Natural killer cell (primary cell): ENCODE measurements at regions of chr2 and their contacts with region 1.

Region 1: DNA sequence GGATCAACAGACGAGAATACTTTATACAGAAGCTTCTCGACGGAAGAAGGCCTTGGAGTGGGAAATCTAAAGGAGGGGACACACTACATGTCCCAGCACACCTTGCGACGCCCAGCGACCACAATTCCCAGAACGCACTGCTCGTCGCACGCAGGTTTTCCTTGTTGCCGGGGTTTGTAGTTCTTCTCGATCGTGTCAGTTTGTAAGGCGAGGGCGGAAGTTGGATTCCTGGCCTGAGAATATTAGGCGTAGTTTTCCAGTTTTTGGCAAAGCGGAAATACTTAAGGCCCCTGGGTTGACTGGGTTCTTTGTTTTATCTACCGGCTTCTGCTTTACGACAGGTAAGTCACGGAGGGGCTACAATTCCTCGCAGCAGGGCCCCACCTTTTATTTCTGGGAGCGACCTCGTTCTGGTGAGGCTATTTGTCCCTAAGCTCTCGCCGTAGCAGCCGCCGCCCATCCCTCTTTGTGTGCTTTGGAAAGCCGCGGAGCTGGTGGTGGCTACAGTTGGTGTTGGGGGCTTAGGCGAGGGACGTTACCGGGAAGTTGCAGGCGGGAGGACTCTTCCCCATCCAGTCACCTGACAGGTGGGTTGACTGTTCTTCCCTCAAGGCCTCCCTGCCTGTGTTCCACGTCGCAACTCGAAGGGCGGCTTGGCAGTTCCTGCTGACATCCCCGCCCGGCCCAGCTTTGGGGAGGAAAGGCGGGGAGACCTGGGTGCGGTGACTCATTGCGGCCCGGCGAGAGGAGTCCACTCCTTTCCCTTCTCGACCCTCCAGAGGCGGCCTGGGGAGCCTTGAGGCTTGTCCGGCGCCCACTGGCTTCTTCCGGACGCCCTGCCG is at the start of gene DYNC1I2:
- DNase-seq: peak; percentile 56 to 85
- ATAC-seq: peak; percentile 70 to 83 (median 74)
- H3K4me3 ChIP-seq: peak within 1 kb of the TSS; percentile 95
- H3K4me3 Mint-ChIP-seq: peak within 1 kb of the TSS; percentile 96
- H3K27ac ChIP-seq: peak within 1 kb of the TSS; percentile 62
- H3K27ac Mint-ChIP-seq: peak within 1 kb of the TSS; percentile 85 to 96
- H3K4me1 ChIP-seq: peaks cover 7% of the 10 kb centered on the region
- H3K4me1 Mint-ChIP-seq: peaks cover 22 to 24% of the 10 kb centered on the region in 2 donors
- H3K27me3 ChIP-seq: no peaks in the 10 kb centered on the region
- H3K27me3 Mint-ChIP-seq: peaks cover 5 to 7% of the 10 kb centered on the region in 2 donors
- CTCF ChIP-seq: no peak
- total RNA-seq, gene DYNC1I2: 26.7 to 36.4 (median 30.2) TPM

Region 2: GRCh38 chr2:171564469-171564868 is 123.0 kb before region 1 on chr2:
- intact Hi-C with region 1: no loop called
- DNase-seq: no peak
- ATAC-seq: no peak
- H3K4me3 ChIP-seq: no peak overlapping the region
- H3K4me3 Mint-ChIP-seq: no peak overlapping the region
- H3K27ac ChIP-seq: no peak overlapping the region
- H3K27ac Mint-ChIP-seq: no peak overlapping the region
- H3K4me1 ChIP-seq: no peaks in the 10 kb centered on the region
- H3K4me1 Mint-ChIP-seq: no peaks in the 10 kb centered on the region
- H3K27me3 ChIP-seq: no peaks in the 10 kb centered on the region
- H3K27me3 Mint-ChIP-seq: no peaks in the 10 kb centered on the region
- CTCF ChIP-seq: no peak

Region 3: DNA sequence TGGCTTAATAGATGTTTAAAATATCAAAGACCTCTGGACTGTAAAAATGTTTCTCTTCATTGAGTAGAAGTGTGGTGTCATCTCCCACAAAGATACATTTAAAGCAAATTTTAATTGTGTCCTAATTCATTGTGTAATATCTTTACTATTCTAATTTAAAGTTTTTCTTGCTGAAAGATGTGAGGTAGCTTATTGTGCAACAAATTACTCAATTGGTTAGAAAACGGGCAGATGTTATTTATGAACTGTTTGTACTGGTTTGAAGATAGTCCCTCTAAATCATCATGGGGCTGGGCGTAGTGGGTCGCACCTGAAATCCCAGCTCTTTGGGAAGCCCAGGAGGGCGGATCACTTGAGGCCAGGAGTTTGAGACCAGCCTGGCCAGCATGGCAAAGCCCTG is 99.9 kb before region 1 on chr2:
- intact Hi-C with region 1: no loop called
- DNase-seq: no peak
- ATAC-seq: no peak
- H3K4me3 ChIP-seq: no peak overlapping the region
- H3K4me3 Mint-ChIP-seq: no peak overlapping the region
- H3K27ac ChIP-seq: no peak overlapping the region
- H3K27ac Mint-ChIP-seq: no peak overlapping the region
- H3K4me1 ChIP-seq: no peaks in the 10 kb centered on the region
- H3K4me1 Mint-ChIP-seq: no peaks in the 10 kb centered on the region
- H3K27me3 ChIP-seq: no peaks in the 10 kb centered on the region
- H3K27me3 Mint-ChIP-seq: peaks cover 23% of the 10 kb centered on the region in 2 donors
- CTCF ChIP-seq: no peak

Region 4: GRCh38 chr2:172095146-172095904 is 407.8 kb after region 1 on chr2:
- intact Hi-C with region 1: loop called (anchors 2 kb)
- DNase-seq: peak; percentile 76 to 91
- ATAC-seq: peak; percentile 81 to 93 (median 91)
- H3K4me3 ChIP-seq: peak overlapping the region; percentile 15
- H3K4me3 Mint-ChIP-seq: peak overlapping the region; percentile 78
- H3K27ac ChIP-seq: no peak overlapping the region
- H3K27ac Mint-ChIP-seq: peak overlapping the region; percentile 68 to 84
- H3K4me1 ChIP-seq: peaks cover 56% of the 10 kb centered on the region
- H3K4me1 Mint-ChIP-seq: peaks cover 42 to 48% of the 10 kb centered on the region in 2 donors
- H3K27me3 ChIP-seq: peaks cover 92% of the 10 kb centered on the region
- H3K27me3 Mint-ChIP-seq: peaks cover 62 to 65% of the 10 kb centered on the region in 2 donors
- CTCF ChIP-seq: no peak